Breast epithelium (tissue), 4 donors: ENCODE measurements at regions of chr1 and their contacts with region 1.

Region 1: DNA sequence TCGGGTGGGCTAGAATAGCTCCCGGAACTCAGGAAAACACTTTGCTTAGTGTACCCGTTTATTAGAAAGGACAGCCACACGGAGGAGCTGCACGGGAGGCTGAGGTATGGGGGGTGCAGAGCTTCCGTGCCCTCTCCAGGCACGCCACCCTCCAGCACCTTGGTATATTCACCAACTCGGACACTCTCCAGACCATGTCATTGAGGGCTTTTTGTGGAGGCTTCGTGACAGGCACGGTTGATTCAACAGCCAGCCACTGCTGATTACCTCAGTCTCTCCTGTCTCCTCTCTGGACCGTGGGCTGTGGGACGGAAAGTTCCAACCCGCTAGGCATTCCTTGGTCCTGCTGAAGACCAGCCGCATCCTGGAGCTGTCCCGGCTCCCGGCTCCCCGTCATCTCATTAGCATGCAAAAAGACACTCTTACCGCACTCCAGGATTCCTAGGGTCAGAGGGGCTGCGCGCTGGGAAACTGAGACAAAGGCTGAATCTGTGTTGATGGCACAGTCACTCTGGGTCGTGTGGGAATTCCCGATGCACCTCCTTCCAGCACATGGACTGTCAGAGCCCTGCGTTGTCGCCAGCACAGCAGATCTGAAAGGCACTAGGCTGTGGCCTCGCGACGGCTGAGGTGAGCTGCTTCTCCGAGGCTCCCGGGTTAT is 65.6 kb downstream of the PRKCZ start:
- DNase-seq: no peak
- H3K4me3 ChIP-seq: no peak overlapping the region
- H3K27ac ChIP-seq: no peak overlapping the region
- H3K4me1 ChIP-seq: no peaks in the 10 kb centered on the region
- H3K27me3 ChIP-seq: no peaks in the 10 kb centered on the region
- CTCF ChIP-seq: no peak
- POLR2A ChIP-seq: no peak

Region 2: DNA sequence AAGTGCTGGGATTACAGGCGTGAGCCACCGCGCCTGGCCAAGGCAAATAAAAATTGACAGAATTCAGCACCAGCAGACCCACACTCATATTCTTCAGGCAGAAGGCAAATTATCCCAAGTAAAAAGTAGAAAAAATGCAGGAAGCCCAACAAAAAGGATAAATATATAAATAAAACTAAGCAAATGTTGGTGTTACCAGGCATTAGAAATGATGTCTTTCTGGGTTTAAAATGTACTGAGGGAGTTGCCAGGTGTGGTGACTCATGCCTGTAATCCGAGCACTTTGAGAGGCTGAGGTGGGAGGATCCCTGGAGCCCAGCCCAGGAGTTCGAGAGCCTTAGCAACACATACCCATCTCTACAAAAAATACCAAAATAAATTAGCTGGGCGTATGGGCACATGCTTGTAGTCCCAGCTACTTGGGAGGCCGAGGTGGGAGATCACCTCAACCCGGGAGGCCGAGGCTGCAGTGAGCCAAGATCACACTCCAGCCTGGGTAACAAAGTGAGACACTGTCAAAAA is 797.6 kb before region 1 on chr1:
- intact Hi-C with region 1: no loop called
- DNase-seq: peak; percentile 84 to 93
- H3K4me3 ChIP-seq: no peak overlapping the region
- H3K27ac ChIP-seq: peak overlapping the region; percentile 75 to 84
- H3K4me1 ChIP-seq: peaks cover 3 to 16% of the 10 kb centered on the region in 2 donors
- H3K27me3 ChIP-seq: no peaks in the 10 kb centered on the region
- CTCF ChIP-seq: no peak
- POLR2A ChIP-seq: no peak

Region 3: GRCh38 chr1:2079396-2080085 is 36.3 kb before region 1 on chr1:
- intact Hi-C with region 1: loop called (anchors 1 kb)
- DNase-seq: no peak
- H3K4me3 ChIP-seq: no peak overlapping the region
- H3K27ac ChIP-seq: no peak overlapping the region
- H3K4me1 ChIP-seq: no peaks in the 10 kb centered on the region
- H3K27me3 ChIP-seq: no peaks in the 10 kb centered on the region
- CTCF ChIP-seq: no peak
- POLR2A ChIP-seq: no peak

Region 4: GRCh38 chr1:2133039-2133878 is 17.4 kb after region 1 on chr1:
- intact Hi-C with region 1: no loop called
- DNase-seq: peak; percentile 93 to 95
- H3K4me3 ChIP-seq: peak overlapping the region; percentile 32 to 60 (median 52)
- H3K27ac ChIP-seq: peak overlapping the region; percentile 89 to 90
- H3K4me1 ChIP-seq: peaks cover 0 to 5% of the 10 kb centered on the region in 2 donors
- H3K27me3 ChIP-seq: no peaks in the 10 kb centered on the region
- CTCF ChIP-seq: peak in 1 of 3 donors; percentile 12
- POLR2A ChIP-seq: no peak